CD8-positive, alpha-beta T cell (primary cell): ENCODE measurements at regions of chr9 and their contacts with region 1.

Region 1: GRCh38 chr9:19925817-19926503 is 137.1 kb upstream of the SLC24A2 start:
- DNase-seq: peak; percentile 61 to 87 (median 78)
- ATAC-seq: peak; percentile 100
- H3K4me3 ChIP-seq: peak overlapping the region in 1 of 2 experiments; percentile 26
- H3K4me3 Mint-ChIP-seq: peak overlapping the region; percentile 59
- H3K27ac ChIP-seq: no peak overlapping the region
- H3K27ac Mint-ChIP-seq: no peak overlapping the region
- H3K4me1 ChIP-seq: peaks cover 4% of the 10 kb centered on the region
- H3K4me1 Mint-ChIP-seq: peaks cover 8% of the 10 kb centered on the region
- H3K27me3 ChIP-seq: no peaks in the 10 kb centered on the region
- H3K27me3 Mint-ChIP-seq: peaks cover 9% of the 10 kb centered on the region
- CTCF ChIP-seq: peak; percentile 87

Region 2: DNA sequence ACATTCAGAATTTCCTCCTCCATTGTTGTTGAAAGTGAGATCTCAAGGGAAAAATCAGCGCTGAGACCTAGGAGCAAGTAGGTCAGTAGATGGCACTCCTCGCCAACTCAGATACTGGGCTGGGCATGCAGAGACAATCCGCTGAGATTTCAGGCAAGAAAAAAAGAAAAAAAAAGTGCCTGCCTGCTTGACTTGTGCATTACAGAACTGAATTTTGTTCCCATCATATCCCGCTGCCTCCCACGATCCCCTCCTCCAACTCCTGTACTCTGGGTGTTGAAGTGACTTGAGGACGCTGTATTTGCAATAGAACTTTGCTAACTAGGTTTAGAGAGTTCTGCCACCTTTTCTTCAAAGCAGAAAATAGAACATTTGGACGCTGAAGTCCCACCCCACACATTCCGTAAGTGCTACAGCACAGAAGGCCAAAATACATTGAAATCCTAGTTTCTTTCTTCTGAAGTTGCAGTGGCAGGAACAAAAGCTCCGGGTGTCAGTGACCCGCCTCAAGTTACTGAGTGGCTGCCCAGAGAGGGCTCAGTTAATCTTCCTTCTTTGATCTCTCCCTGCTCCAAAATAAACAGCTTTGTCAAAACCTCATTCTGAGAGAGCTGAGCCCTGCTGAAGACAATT is 430.6 kb after region 1 on chr9:
- CTCF ChIA-PET with region 1: interaction called, 3 read pairs
- POLR2A ChIA-PET with region 1: no interaction called
- intact Hi-C with region 1: loop called (anchors 1 to 5 kb)
- DNase-seq: peak; percentile 6 to 69 (median 42)
- ATAC-seq: peak; percentile 75
- H3K4me3 ChIP-seq: no peak overlapping the region
- H3K4me3 Mint-ChIP-seq: no peak overlapping the region
- H3K27ac ChIP-seq: no peak overlapping the region
- H3K27ac Mint-ChIP-seq: no peak overlapping the region
- H3K4me1 ChIP-seq: peaks cover 7% of the 10 kb centered on the region
- H3K4me1 Mint-ChIP-seq: peaks cover 38% of the 10 kb centered on the region
- H3K27me3 ChIP-seq: no peaks in the 10 kb centered on the region
- H3K27me3 Mint-ChIP-seq: no peaks in the 10 kb centered on the region
- CTCF ChIP-seq: peak; percentile 59

Region 3: DNA sequence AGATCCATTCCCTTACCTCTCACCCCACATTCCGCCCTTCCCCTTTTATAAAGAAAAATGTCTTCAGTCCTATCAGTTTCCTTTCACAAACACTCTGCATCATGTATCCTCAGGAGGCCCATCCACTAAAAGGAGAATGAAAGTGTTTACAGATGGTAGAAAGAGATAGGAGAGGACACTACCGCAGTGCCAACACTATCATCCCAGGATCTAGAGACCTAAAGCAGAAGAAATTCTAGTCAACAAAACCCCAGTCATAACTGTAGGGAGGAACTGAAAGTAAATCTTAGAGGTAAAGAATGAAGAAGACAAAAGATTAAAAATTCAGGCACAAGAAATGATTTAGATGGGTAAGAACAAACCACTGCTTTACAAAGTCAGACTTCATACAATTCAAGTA is 582.3 kb after region 1 on chr9:
- CTCF ChIA-PET with region 1: no interaction called
- POLR2A ChIA-PET with region 1: no interaction called
- intact Hi-C with region 1: loop called in 1 of 2 experiments (anchors 10 kb)
- DNase-seq: peak in 1 of 9 experiments; percentile 14
- ATAC-seq: peak; percentile 15
- H3K4me3 ChIP-seq: no peak overlapping the region
- H3K4me3 Mint-ChIP-seq: peak overlapping the region; percentile 17
- H3K27ac ChIP-seq: no peak overlapping the region
- H3K27ac Mint-ChIP-seq: peak overlapping the region; percentile 63
- H3K4me1 ChIP-seq: peaks cover 44% of the 10 kb centered on the region
- H3K4me1 Mint-ChIP-seq: peaks cover 80% of the 10 kb centered on the region
- H3K27me3 ChIP-seq: no peaks in the 10 kb centered on the region
- H3K27me3 Mint-ChIP-seq: no peaks in the 10 kb centered on the region
- CTCF ChIP-seq: no peak

Region 4: DNA sequence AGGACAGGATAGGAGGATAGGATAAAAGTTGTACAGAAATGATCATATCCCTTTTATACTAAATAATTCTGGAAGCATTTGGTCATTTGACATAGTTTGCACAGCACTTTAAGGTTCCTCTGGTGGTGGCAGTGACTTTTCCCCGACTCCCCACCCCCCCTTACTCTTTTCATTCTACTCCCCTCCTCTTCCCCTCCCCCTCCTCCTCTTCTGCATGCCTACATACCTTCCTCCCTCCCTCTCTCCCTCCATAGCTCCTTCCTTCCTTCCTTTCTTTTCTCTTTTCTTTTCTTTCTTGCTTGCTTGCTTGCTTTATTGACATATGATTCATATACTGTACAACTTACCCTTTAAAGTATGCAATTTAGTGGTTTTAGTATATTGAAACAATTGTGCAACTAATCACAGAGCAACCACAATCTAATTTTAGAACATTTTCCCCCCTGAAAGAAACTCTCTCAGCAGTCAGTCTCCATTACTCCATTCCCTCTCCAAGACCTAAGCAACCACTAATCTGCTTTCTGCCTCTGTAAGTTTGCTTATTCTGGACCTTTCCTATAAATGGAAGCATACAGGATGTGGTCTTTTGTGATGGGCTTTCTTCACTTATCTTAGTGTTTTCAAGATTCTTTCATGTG is 946.5 kb after region 1 on chr9:
- CTCF ChIA-PET with region 1: no interaction called
- POLR2A ChIA-PET with region 1: no interaction called
- intact Hi-C with region 1: loop called in 1 of 2 experiments (anchors 1 kb)
- DNase-seq: no peak
- ATAC-seq: no peak
- H3K4me3 ChIP-seq: no peak overlapping the region
- H3K4me3 Mint-ChIP-seq: no peak overlapping the region
- H3K27ac ChIP-seq: no peak overlapping the region
- H3K27ac Mint-ChIP-seq: no peak overlapping the region
- H3K4me1 ChIP-seq: peaks cover 4% of the 10 kb centered on the region
- H3K4me1 Mint-ChIP-seq: peaks cover 5% of the 10 kb centered on the region
- H3K27me3 ChIP-seq: no peaks in the 10 kb centered on the region
- H3K27me3 Mint-ChIP-seq: no peaks in the 10 kb centered on the region
- CTCF ChIP-seq: no peak

Region 5: DNA sequence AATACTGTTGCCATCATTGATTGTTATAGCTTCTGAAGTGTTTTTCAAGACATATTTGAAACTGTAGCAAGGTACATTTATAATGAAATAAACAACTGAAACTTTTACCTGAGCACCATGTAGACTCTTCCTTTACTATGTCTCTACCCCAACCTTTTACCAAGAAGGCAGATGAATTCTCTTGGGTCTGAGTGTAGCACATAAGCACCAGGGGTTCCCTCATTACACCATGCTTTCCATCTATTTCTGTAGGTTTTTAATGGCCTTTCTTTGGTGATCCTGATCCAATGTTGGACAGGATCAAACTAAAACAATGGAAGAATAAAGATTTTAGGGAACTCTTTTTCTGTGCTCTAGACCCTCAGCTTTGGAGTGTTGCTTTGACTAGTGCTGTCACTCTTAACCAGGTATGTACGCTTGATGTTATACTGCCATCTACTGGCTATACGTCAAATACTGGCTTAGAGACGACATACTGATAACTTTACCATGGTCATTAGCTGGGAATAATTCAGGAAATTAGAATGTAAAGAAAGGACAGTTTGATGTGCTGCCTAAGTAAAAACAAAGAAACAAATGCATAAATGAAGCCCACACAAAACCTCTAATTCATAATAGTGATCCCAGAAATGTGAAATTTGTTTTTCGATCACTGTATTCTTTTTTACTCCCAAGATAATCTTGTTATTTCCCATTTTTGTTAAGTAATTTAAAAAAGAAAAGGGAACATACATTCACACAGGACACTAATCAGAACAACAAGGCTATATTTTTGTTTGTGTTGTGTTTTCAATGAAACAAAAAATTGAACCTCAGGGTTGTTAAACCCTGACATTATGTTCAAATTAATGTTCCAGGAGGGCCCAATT is 1185.0 kb after region 1 on chr9:
- CTCF ChIA-PET with region 1: interaction called, 48 read pairs
- POLR2A ChIA-PET with region 1: no interaction called
- intact Hi-C with region 1: loop called (anchors 1 kb)
- DNase-seq: peak in 3 of 9 experiments; percentile 19 to 85 (median 78)
- ATAC-seq: peak; percentile 92
- H3K4me3 ChIP-seq: no peak overlapping the region
- H3K4me3 Mint-ChIP-seq: no peak overlapping the region
- H3K27ac ChIP-seq: no peak overlapping the region
- H3K27ac Mint-ChIP-seq: no peak overlapping the region
- H3K4me1 ChIP-seq: no peaks in the 10 kb centered on the region
- H3K4me1 Mint-ChIP-seq: no peaks in the 10 kb centered on the region
- H3K27me3 ChIP-seq: no peaks in the 10 kb centered on the region
- H3K27me3 Mint-ChIP-seq: peaks cover 2% of the 10 kb centered on the region
- CTCF ChIP-seq: peak; percentile 95